ENCODE measurements at regions of chr22 and their contacts with region 1.

Region 1: DNA sequence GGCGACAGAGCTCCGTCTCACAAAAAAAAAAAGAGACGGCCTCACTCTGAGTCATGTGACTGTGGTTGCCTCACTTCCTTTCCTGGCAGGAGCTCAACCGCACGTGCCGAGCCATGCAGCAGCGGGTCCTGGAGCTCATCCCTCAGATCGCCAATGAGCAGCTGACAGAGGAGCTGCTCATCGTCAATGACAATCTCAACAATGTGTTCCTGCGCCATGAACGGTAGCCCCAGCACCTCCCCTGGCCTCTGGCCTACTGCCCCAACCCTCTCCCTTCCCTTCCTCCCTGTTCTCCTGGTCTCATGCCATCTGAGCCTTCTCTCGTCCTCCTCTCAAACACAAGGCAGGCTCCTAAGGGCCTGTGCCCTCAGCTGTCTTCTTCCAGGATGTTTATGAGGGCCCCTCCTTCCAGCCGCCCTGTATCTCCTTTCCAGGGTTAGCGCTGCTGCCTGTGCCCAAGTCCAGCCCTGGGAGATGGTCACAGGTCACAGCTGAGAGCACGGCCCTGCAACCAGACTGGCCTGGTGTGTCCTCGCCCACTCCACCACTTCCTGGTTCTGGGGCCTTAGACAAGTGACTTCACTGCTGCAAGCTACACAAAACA is 30.7 kb downstream of the TOM1 start:
- DNase-seq: peak in 4 of 5 donors; percentile 24 to 59 (median 38)
- H3K4me3 ChIP-seq: no peak overlapping the region
- H3K4me3 Mint-ChIP-seq: peak overlapping the region in 6 of 7 donors; percentile 48 to 81 (median 57)
- H3K27ac ChIP-seq: no peak overlapping the region
- H3K27ac Mint-ChIP-seq: peak overlapping the region; percentile 68 to 94 (median 84)
- H3K4me1 ChIP-seq: peaks cover 20% of the 10 kb centered on the region
- H3K4me1 Mint-ChIP-seq: peaks cover 13 to 34% (median 32%) of the 10 kb centered on the region in 3 donors
- H3K27me3 ChIP-seq: no peaks in the 10 kb centered on the region
- H3K27me3 Mint-ChIP-seq: peaks cover 0 to 1% of the 10 kb centered on the region in 2 donors

Region 2: GRCh38 chr22:35425971-35426800 is 95.8 kb after region 1 on chr22:
- CTCF ChIA-PET with region 1: no interaction called
- POLR2A ChIA-PET with region 1: no interaction called
- DNase-seq: no peak
- H3K4me3 ChIP-seq: no peak overlapping the region
- H3K4me3 Mint-ChIP-seq: no peak overlapping the region
- H3K27ac ChIP-seq: no peak overlapping the region
- H3K27ac Mint-ChIP-seq: peak overlapping the region in 6 of 8 donors; percentile 37 to 92 (median 56)
- H3K4me1 ChIP-seq: no peaks in the 10 kb centered on the region
- H3K4me1 Mint-ChIP-seq: peaks cover 0 to 5% (median 0%) of the 10 kb centered on the region in 3 donors
- H3K27me3 ChIP-seq: no peaks in the 10 kb centered on the region
- H3K27me3 Mint-ChIP-seq: peaks cover 0 to 1% of the 10 kb centered on the region in 2 donors

Region 3: DNA sequence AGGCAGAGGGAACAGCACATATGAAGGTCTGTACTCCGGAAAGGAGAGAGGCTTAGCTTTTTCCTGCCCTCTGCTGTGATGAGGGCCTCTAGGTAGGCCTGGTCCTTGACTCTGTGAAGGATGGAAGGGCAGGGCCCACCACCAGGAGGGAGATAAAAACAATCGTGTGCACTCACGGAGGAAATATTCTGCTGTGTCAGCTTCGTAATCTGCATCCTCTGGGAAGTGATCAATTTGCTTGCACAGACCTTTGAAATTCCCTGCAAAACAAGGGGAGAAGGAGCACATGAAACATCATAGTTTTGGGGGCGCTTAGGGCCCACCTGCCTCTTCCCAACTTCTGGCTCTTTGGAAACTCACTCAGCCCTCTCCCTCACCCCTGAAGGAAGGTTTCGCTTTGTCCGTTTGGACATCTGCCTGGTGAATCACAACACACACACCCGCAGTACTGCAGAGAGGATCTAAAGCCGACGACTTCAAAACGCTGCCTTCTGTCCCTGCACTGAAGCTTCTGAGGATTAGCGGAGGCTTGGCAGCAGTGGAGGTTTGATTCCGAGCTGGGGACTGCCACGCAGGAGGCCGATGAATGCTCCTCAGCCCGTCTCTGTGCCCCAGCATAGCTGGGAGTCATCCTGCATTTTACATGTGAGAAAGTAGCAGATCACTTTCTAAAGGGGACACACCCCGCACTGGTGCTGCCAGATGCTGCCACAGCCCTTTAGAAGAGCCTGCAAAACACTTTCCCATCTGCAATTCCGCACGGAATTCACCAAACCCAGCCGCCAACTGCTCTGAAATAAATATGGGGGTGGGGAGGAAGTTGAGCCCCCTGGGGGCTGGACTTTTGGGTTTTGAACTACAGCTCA is 1257.2 kb after region 1 on chr22:
- CTCF ChIA-PET with region 1: no interaction called
- POLR2A ChIA-PET with region 1: interaction called, 13 read pairs
- DNase-seq: no peak
- H3K4me3 ChIP-seq: no peak overlapping the region
- H3K4me3 Mint-ChIP-seq: no peak overlapping the region
- H3K27ac ChIP-seq: no peak overlapping the region
- H3K27ac Mint-ChIP-seq: no peak overlapping the region
- H3K4me1 ChIP-seq: no peaks in the 10 kb centered on the region
- H3K4me1 Mint-ChIP-seq: no peaks in the 10 kb centered on the region
- H3K27me3 ChIP-seq: no peaks in the 10 kb centered on the region
- H3K27me3 Mint-ChIP-seq: peaks cover 18 to 66% of the 10 kb centered on the region in 2 donors